ENCODE measurements at regions of chr18 and their contacts with region 1.

Region 1: DNA sequence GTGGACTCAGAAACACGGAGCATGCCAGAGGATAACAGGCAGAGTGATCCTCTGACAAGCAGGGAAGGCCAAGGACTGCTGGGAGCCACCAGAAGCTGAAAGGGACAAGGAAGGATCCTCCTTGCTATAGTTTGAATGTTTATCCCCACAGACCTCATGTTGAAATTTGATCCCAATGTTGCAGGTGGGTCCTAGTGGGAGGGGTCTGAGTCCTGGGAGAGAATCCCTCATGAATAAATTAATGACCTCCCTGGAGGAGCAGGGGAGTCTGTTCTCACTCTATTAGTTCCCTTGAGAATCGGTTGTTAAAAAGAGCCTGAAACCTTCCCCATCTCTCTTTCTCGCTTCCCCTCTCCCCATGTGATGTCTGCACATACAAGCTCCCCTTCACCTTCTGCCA is 124.4 kb downstream of the FBXO15 start:
- DNase-seq: no peak
- H3K4me3 ChIP-seq: no peak overlapping the region
- H3K27ac ChIP-seq: no peak overlapping the region
- H3K4me1 ChIP-seq: no peaks in the 10 kb centered on the region
- H3K27me3 ChIP-seq: no peaks in the 10 kb centered on the region
- CTCF ChIP-seq: no peak
- POLR2A ChIP-seq: no peak

Region 2: GRCh38 chr18:73199151-73199550 is 824.1 kb before region 1 on chr18:
- intact Hi-C with region 1: loop called (anchors 5 kb)
- DNase-seq: no peak
- H3K4me3 ChIP-seq: no peak overlapping the region
- H3K27ac ChIP-seq: no peak overlapping the region
- H3K4me1 ChIP-seq: no peaks in the 10 kb centered on the region
- H3K27me3 ChIP-seq: no peaks in the 10 kb centered on the region
- CTCF ChIP-seq: no peak
- POLR2A ChIP-seq: no peak